ENCODE measurements at regions of chr9 and their contacts with region 1.

Region 1: GRCh38 chr9:131125128-131126058 is at the start of gene NUP214:
- DNase-seq: peak; percentile 98 to 100 (median 99)
- H3K4me3 ChIP-seq: peak within 1 kb of the TSS; percentile 85 to 95
- H3K4me3 Mint-ChIP-seq: peak within 1 kb of the TSS; percentile 97 to 100 (median 99)
- H3K27ac ChIP-seq: peak within 1 kb of the TSS; percentile 90
- H3K27ac Mint-ChIP-seq: peak within 1 kb of the TSS; percentile 99 to 100 (median 100)
- H3K4me1 ChIP-seq: peaks cover 17% of the 10 kb centered on the region
- H3K4me1 Mint-ChIP-seq: peaks cover 19 to 42% (median 28%) of the 10 kb centered on the region in 4 donors
- H3K27me3 ChIP-seq: no peaks in the 10 kb centered on the region
- H3K27me3 Mint-ChIP-seq: peaks cover 0 to 3% of the 10 kb centered on the region in 2 donors
- total RNA-seq, gene NUP214: 72.1 to 79.5 TPM

Region 2: GRCh38 chr9:131053896-131054295 is 71.5 kb before region 1 on chr9:
- CTCF ChIA-PET with region 1: no interaction called
- POLR2A ChIA-PET with region 1: interaction called, 3 read pairs
- intact Hi-C with region 1: loop called (anchors 2 kb)
- DNase-seq: no peak
- H3K4me3 ChIP-seq: no peak overlapping the region
- H3K4me3 Mint-ChIP-seq: no peak overlapping the region
- H3K27ac ChIP-seq: no peak overlapping the region
- H3K27ac Mint-ChIP-seq: no peak overlapping the region
- H3K4me1 ChIP-seq: no peaks in the 10 kb centered on the region
- H3K4me1 Mint-ChIP-seq: no peaks in the 10 kb centered on the region
- H3K27me3 ChIP-seq: peaks cover 4% of the 10 kb centered on the region
- H3K27me3 Mint-ChIP-seq: peaks cover 3 to 7% of the 10 kb centered on the region in 2 donors

Region 3: GRCh38 chr9:131246618-131247017 is 121.2 kb after region 1 on chr9:
- CTCF ChIA-PET with region 1: no interaction called
- POLR2A ChIA-PET with region 1: no interaction called
- intact Hi-C with region 1: no loop called
- DNase-seq: no peak
- H3K4me3 ChIP-seq: no peak overlapping the region
- H3K4me3 Mint-ChIP-seq: no peak overlapping the region
- H3K27ac ChIP-seq: no peak overlapping the region
- H3K27ac Mint-ChIP-seq: no peak overlapping the region
- H3K4me1 ChIP-seq: peaks cover 5% of the 10 kb centered on the region
- H3K4me1 Mint-ChIP-seq: peaks cover 2 to 12% (median 4%) of the 10 kb centered on the region in 4 donors
- H3K27me3 ChIP-seq: no peaks in the 10 kb centered on the region
- H3K27me3 Mint-ChIP-seq: no peaks in the 10 kb centered on the region

Region 4: DNA sequence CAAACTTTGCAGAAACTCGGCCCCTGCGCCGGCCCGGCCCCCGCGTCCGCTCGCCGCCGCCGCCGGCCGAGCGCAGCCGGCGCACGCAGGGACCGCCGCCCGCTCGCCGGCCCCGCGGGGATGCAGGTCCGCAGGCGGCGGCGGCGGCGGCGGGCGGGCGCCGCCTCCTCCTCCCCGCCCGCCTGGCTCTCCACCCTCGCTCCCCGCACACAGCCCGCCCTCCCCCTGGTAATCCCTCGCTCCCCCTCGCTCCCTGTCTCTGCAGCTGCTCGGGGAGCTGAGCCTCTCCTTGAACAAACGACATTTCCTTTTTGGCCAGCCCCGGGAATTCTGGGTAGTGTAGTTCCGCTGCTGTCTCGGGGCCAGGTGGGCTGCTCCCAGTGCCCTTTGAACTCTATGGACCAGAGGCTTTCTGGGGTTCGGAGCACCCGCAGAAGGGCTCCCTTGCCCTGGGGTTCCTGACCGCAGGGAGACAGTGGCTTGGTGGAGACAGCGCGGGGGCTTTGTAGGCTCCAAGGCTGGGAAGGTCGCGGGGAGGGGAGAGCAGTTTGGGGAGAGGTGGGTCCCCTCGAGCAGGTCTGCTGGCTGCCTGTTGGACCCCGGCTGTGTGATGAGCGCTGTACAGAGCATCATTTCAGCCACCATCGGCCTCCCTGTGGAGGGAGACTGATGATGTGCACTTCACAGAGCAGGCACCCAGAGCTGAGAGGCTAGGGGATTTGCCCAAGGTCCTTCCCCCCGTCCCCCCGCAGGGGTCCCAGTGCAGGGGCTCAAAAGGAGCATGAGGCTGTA is 152.7 kb after region 1 on chr9:
- CTCF ChIA-PET with region 1: no interaction called
- POLR2A ChIA-PET with region 1: no interaction called
- intact Hi-C with region 1: loop called (anchors 2 kb)
- DNase-seq: peak; percentile 60 to 78 (median 61)
- H3K4me3 ChIP-seq: peak overlapping the region; percentile 21 to 65
- H3K4me3 Mint-ChIP-seq: peak overlapping the region; percentile 84 to 93 (median 91)
- H3K27ac ChIP-seq: peak overlapping the region; percentile 79
- H3K27ac Mint-ChIP-seq: peak overlapping the region; percentile 92 to 95 (median 94)
- H3K4me1 ChIP-seq: peaks cover 27% of the 10 kb centered on the region
- H3K4me1 Mint-ChIP-seq: peaks cover 22 to 49% (median 25%) of the 10 kb centered on the region in 4 donors
- H3K27me3 ChIP-seq: no peaks in the 10 kb centered on the region
- H3K27me3 Mint-ChIP-seq: peaks cover 2 to 3% of the 10 kb centered on the region in 2 donors

Region 5: DNA sequence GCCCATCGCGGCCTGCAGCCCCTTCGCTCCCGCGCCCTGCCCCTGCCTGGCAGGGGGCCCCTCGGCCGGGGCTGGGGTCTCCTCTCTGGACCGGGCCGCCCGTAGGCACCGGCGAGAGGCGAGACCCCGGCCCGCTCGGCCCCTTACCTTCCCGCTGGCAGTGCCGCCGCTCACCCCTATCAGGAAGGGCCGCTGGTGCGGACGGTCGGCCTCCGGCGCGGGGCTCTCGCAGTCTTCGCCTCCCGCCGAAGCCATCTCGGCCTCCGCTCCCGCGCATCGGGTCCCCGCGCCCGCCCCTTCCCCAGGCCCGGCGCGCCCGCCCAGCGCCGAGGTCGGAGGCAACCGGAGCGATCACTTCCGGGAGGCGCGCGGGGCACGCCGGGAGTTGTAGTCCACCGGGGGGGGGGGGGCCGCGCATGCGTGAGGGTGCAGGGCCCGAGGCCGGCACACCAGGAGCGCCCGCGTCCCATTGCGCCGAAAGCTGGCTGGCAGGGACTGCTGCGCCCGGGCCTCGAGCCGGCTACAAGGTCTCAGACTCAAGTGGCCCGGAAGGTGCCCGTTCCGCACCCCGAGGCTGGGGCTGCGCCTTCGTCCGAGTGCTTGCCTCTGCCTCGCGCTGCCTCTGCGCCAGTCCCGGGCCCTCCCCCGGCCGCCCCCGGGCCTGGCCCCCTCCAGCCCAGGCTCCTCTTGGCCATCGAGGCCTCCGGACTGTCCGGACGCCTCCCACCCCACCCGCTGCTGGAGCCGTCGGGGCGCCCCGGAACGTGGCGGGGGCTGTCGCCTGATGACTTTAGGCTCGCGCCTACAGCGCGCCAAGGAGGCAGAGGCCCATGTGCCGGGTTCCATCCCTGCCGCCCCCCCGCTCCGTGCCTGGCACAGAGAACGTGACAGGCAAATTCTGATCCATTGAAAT is 405.8 kb after region 1 on chr9 and contains the start of gene UCK1:
- CTCF ChIA-PET with region 1: no interaction called
- POLR2A ChIA-PET with region 1: no interaction called
- intact Hi-C with region 1: loop called (anchors 1 kb)
- DNase-seq: peak; percentile 72 to 76 (median 72)
- H3K4me3 ChIP-seq: peak within 1 kb of the TSS in 1 of 2 donors; percentile 73
- H3K4me3 Mint-ChIP-seq: peak within 1 kb of the TSS; percentile 69 to 84 (median 74)
- H3K27ac ChIP-seq: peak within 1 kb of the TSS; percentile 69
- H3K27ac Mint-ChIP-seq: peak within 1 kb of the TSS in 6 of 7 donors; percentile 29 to 79 (median 54)
- H3K4me1 ChIP-seq: peaks cover 42% of the 10 kb centered on the region
- H3K4me1 Mint-ChIP-seq: peaks cover 12 to 52% (median 25%) of the 10 kb centered on the region in 4 donors
- H3K27me3 ChIP-seq: no peaks in the 10 kb centered on the region
- H3K27me3 Mint-ChIP-seq: no peaks in the 10 kb centered on the region
- total RNA-seq, gene UCK1: 36.1 to 39.7 TPM

Measured in CD4-positive, alpha-beta memory T cell (primary cell).